ENCODE measurements at regions of chr18 and their contacts with region 1.

Region 1: GRCh38 chr18:69120833-69121232 is 279.9 kb upstream of the DOK6 start:
- DNase-seq: no peak
- H3K4me3 ChIP-seq: no peak overlapping the region
- H3K27ac ChIP-seq: no peak overlapping the region
- H3K4me1 ChIP-seq: no peaks in the 10 kb centered on the region
- H3K27me3 ChIP-seq: no peaks in the 10 kb centered on the region
- CTCF ChIP-seq: no peak

Region 2: DNA sequence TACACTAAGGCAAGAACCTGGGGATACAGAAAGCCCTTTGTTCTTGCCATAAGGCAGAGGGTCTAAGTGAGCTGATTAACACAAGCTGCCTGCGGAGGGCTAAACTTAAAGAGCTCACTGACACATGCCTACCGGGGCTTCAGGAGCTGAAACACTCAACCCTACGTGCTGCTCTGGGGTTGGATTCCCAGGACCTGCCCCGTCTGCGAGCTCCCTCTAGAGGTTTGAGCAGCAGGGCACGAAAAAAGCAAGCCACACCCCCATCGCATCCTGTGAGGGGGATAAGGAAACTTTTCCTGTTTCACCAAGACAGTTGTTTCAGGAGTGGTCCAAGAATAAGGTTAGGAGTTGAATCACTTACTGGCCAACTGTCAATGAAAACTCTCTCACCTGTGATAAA is 968.1 kb before region 1 on chr18:
- CTCF ChIA-PET with region 1: no interaction called
- POLR2A ChIA-PET with region 1: no interaction called
- intact Hi-C with region 1: no loop called
- DNase-seq: peak; percentile 18
- H3K4me3 ChIP-seq: no peak overlapping the region
- H3K27ac ChIP-seq: no peak overlapping the region
- H3K4me1 ChIP-seq: peaks cover 3% of the 10 kb centered on the region
- H3K27me3 ChIP-seq: no peaks in the 10 kb centered on the region
- CTCF ChIP-seq: 0 out of 2 replicates have a peak, but pooled peaks have one; percentile 23

Region 3: DNA sequence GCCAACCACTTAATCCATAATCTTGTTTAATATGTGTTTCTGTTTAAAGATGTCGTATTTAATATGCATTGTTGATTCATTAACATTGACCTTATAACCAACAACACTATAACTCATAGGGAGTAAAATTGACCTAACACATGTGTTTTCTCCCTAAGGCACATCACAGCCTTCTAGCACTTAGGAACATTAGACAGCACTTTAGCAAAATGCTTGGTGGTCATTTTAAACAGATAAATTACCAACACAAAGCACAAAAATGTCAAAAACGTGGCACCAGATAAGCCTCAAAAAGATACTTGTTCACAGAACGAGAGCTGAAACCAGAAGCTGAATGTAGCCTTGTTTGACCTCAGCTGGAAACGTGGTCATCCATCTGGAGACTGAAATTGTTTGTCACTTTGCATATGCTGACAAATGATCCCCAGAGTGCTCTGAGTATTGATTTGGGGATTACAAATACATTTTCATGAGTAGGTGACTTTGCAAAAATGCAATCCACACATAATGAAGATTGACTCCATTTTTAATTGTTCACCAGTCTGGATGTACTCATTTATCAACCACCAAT is 183.7 kb before region 1 on chr18:
- CTCF ChIA-PET with region 1: no interaction called
- POLR2A ChIA-PET with region 1: no interaction called
- intact Hi-C with region 1: no loop called
- DNase-seq: no peak
- H3K4me3 ChIP-seq: no peak overlapping the region
- H3K27ac ChIP-seq: no peak overlapping the region
- H3K4me1 ChIP-seq: peaks cover 3% of the 10 kb centered on the region
- H3K27me3 ChIP-seq: no peaks in the 10 kb centered on the region
- CTCF ChIP-seq: no peak

Region 4: DNA sequence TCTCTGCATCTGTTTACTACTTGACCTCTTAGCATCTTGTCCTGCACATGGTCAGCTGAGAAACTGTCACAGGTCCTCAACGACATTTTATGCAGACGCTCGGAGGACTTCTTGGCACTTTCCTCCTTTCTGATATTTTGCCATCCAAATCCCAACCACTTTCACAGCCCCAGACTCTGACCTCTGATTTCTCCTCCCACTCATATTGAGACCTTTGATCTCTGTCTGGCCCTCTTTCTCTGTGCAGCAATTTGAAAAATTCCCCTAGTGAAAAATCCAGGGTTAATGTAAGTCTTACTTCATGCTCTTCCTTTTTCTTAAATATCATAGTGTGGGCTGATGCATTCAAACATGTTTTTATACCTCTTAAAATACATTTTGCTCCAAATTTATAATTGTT is 49.2 kb before region 1 on chr18:
- CTCF ChIA-PET with region 1: no interaction called
- POLR2A ChIA-PET with region 1: no interaction called
- intact Hi-C with region 1: no loop called
- DNase-seq: no peak
- H3K4me3 ChIP-seq: no peak overlapping the region
- H3K27ac ChIP-seq: no peak overlapping the region
- H3K4me1 ChIP-seq: no peaks in the 10 kb centered on the region
- H3K27me3 ChIP-seq: no peaks in the 10 kb centered on the region
- CTCF ChIP-seq: no peak

Region 5: GRCh38 chr18:69102959-69103358 is 17.9 kb before region 1 on chr18:
- CTCF ChIA-PET with region 1: no interaction called
- POLR2A ChIA-PET with region 1: no interaction called
- intact Hi-C with region 1: loop called (anchors 1 kb)
- DNase-seq: no peak
- H3K4me3 ChIP-seq: no peak overlapping the region
- H3K27ac ChIP-seq: no peak overlapping the region
- H3K4me1 ChIP-seq: no peaks in the 10 kb centered on the region
- H3K27me3 ChIP-seq: no peaks in the 10 kb centered on the region
- CTCF ChIP-seq: no peak

Region 6: GRCh38 chr18:69300185-69300584 is 179.4 kb after region 1 on chr18:
- CTCF ChIA-PET with region 1: no interaction called
- POLR2A ChIA-PET with region 1: no interaction called
- intact Hi-C with region 1: no loop called
- DNase-seq: no peak
- H3K4me3 ChIP-seq: no peak overlapping the region
- H3K27ac ChIP-seq: no peak overlapping the region
- H3K4me1 ChIP-seq: no peaks in the 10 kb centered on the region
- H3K27me3 ChIP-seq: no peaks in the 10 kb centered on the region
- CTCF ChIP-seq: no peak

Measured in A673 (cell line).